MCF 10A (cell line): ENCODE measurements at regions of chr5 and their contacts with region 1.

Region 1: DNA sequence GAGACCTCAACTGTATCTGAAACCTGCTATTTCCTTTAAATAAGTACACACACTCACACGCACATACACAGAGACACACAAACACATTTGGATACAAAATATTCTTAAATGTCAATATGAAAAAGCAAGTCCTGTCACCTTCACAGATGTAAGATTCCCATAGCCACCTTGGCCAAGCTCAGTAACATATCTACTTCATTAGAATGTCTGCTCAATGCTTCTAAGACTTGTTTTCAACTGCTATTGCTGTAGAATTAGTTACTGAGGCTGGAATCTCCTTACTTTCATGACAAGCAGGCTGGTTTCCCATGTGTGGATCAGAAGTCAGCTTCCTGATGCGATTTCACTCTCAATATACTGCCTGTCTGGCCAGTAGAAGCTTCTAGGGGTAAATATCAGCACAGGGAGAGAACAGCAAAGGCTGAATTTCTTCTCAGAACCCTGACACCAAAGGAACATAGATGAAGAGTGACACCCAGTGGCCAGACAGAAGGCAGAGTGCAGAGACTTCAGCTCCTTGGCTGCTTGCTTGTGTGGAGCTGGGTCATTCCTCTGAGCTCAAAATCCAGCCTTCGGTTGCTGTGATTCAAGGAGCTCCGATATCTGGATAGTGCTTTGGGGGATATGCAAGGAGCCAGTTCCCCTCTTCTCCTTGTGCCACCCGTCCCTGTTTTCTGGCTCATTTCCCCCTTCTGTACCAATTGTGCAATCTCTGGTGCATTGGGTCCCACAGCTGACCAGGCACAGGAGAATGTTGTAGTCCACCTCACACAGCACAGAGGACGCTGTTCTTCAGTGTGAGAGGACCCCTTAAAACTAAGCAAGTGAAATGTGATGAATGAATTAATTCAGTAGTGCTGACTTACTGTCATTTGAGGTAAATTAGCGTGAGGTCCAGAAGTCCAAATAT is 26.6 kb upstream of the ABLIM3 start:
- DNase-seq: peak; percentile 93
- H3K4me3 Mint-ChIP-seq: no peak overlapping the region
- H3K27ac Mint-ChIP-seq: peak overlapping the region; percentile 65
- H3K4me1 Mint-ChIP-seq: peaks cover 45% of the 10 kb centered on the region
- H3K27me3 Mint-ChIP-seq: no peaks in the 10 kb centered on the region
- CTCF ChIP-seq: peak; percentile 97

Region 2: DNA sequence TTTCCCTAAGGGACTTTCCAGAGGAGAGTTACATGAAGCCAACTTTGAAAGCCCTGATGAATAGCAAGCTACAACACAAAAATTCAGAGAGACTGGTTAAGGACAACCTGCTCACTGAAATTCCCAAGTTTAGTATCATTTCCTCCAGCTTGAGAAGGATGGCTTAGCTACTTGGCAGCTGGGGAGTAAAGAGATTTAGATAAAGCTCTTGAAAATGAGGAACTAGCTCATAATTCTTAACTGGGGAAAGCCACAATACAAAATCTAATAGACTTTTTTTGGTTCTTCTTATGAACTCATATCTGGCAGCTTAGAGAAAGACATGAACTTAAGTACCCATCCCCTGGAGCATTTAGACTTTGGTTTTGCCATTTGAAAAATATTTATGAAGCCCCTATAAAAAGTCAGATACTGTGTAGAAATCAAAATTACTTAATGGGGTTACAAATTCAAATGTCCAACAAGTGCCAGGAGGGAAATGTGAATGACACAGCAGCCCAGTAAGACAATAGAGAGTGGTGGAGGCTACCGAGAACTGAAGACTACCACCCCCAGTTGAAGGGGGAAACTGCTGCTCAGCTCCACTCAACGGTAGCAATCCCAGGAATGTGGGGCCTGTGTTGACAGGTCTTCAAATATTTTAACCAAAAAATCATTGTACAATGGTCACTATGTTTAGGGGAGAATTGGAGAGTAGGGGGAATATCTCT is 367.7 kb before region 1 on chr5:
- CTCF ChIA-PET with region 1: interaction called, 732 read pairs
- POLR2A ChIA-PET with region 1: no interaction called
- intact Hi-C with region 1: no loop called
- DNase-seq: no peak
- H3K4me3 Mint-ChIP-seq: no peak overlapping the region
- H3K27ac Mint-ChIP-seq: no peak overlapping the region
- H3K4me1 Mint-ChIP-seq: no peaks in the 10 kb centered on the region
- H3K27me3 Mint-ChIP-seq: no peaks in the 10 kb centered on the region
- CTCF ChIP-seq: no peak

Region 3: GRCh38 chr5:148912714-148913398 is 201.8 kb before region 1 on chr5:
- CTCF ChIA-PET with region 1: interaction called, 12 read pairs
- POLR2A ChIA-PET with region 1: interaction called, 10 read pairs
- intact Hi-C with region 1: loop called (anchors 1 kb)
- DNase-seq: peak; percentile 98
- H3K4me3 Mint-ChIP-seq: peak overlapping the region; percentile 1
- H3K27ac Mint-ChIP-seq: peak overlapping the region; percentile 76
- H3K4me1 Mint-ChIP-seq: peaks cover 68% of the 10 kb centered on the region
- H3K27me3 Mint-ChIP-seq: no peaks in the 10 kb centered on the region
- CTCF ChIP-seq: peak; percentile 75

Region 4: DNA sequence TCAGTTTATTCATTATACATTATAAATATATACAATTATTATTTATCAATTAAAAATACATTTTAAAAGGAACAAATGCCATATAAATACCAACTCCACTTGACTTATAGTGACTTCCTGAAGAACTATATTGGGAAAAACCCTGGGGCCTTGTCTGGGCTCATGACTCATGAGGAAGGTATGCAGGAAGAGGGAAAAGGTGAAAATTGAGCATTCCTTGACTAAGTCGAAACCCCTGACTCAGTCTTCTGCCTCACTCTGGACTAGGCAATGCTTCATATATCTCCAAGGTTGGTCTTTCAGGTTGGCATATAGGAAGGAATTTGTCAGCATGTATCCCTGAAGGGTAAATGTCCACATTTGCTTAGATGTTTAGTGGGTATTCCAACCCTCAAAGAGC is 130.3 kb before region 1 on chr5:
- CTCF ChIA-PET with region 1: interaction called, 18 read pairs
- POLR2A ChIA-PET with region 1: interaction called, 7 read pairs
- intact Hi-C with region 1: no loop called
- DNase-seq: peak; percentile 89
- H3K4me3 Mint-ChIP-seq: no peak overlapping the region
- H3K27ac Mint-ChIP-seq: peak overlapping the region; percentile 95
- H3K4me1 Mint-ChIP-seq: peaks cover 68% of the 10 kb centered on the region
- H3K27me3 Mint-ChIP-seq: no peaks in the 10 kb centered on the region
- CTCF ChIP-seq: no peak

Region 5: GRCh38 chr5:149011074-149011476 is 103.6 kb before region 1 on chr5:
- CTCF ChIA-PET with region 1: interaction called, 41 read pairs
- POLR2A ChIA-PET with region 1: interaction called, 5 read pairs
- intact Hi-C with region 1: no loop called
- DNase-seq: peak; percentile 89
- H3K4me3 Mint-ChIP-seq: no peak overlapping the region
- H3K27ac Mint-ChIP-seq: peak overlapping the region; percentile 81
- H3K4me1 Mint-ChIP-seq: peaks cover 24% of the 10 kb centered on the region
- H3K27me3 Mint-ChIP-seq: no peaks in the 10 kb centered on the region
- CTCF ChIP-seq: peak; percentile 14

Region 6: GRCh38 chr5:149074106-149074505 is 40.6 kb before region 1 on chr5:
- CTCF ChIA-PET with region 1: interaction called, 37 read pairs
- POLR2A ChIA-PET with region 1: interaction called, 3 read pairs
- intact Hi-C with region 1: no loop called
- DNase-seq: no peak
- H3K4me3 Mint-ChIP-seq: no peak overlapping the region
- H3K27ac Mint-ChIP-seq: peak overlapping the region; percentile 53
- H3K4me1 Mint-ChIP-seq: peaks cover 32% of the 10 kb centered on the region
- H3K27me3 Mint-ChIP-seq: no peaks in the 10 kb centered on the region
- CTCF ChIP-seq: no peak

Region 7: GRCh38 chr5:149268928-149269557 is 154.4 kb after region 1 on chr5:
- CTCF ChIA-PET with region 1: interaction called, 25 read pairs
- POLR2A ChIA-PET with region 1: interaction called, 7 read pairs
- intact Hi-C with region 1: no loop called
- DNase-seq: peak; percentile 84
- H3K4me3 Mint-ChIP-seq: no peak overlapping the region
- H3K27ac Mint-ChIP-seq: no peak overlapping the region
- H3K4me1 Mint-ChIP-seq: peaks cover 14% of the 10 kb centered on the region
- H3K27me3 Mint-ChIP-seq: no peaks in the 10 kb centered on the region
- CTCF ChIP-seq: peak; percentile 91